Naive thymus-derived CD4-positive, alpha-beta T cell (primary cell): ENCODE measurements at regions of chr5 and their contacts with region 1.

Region 1: DNA sequence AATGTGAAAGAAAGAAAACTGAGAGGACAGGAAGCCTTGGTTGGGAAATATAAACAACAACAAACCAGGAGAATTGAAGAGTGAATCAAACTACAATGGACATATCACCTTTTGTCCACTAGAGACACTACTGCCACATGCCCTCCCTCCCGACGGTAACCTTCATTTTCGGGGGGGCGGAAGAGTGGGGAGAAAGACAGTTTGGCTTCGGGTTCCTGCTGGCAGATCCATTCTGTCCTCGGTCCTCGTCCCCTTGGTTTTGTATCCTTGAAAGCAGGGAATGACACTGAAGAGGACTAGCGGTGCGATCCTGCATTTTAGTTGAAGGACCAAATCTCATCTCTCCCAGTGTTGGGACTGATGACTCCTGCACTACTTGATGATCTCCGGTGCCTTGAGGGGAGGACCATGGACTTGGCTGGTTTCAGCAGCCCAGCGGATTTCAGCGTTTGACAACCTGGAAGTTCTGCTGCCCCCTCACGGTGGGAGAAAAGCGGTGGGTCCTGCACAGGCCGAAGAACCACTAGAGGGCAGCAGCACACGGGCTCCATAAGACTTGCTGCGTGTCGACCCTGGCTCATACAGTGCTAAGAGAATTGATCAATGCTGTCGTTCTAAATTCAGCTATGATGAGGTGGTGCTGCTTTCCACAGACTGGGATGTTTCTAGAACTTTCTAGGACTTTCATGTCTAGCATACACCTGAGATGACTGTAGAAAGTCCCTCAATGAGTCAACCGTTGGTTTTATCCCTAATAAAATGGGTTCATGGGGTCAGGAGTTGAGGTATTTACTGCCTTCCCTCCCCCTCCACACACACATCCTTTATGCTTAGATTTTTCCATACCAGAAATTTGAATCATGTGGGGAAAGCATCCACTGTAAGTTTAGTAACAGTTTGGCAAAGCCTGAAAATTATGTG is 15.1 kb upstream of the ZNF131 start:
- DNase-seq: peak; percentile 75 to 90 (median 85)
- ATAC-seq: peak; percentile 99
- H3K4me3 ChIP-seq: peak overlapping the region; percentile 66
- H3K4me3 Mint-ChIP-seq: peak overlapping the region; percentile 77 to 93 (median 89)
- H3K27ac ChIP-seq: peak overlapping the region; percentile 59
- H3K27ac Mint-ChIP-seq: peak overlapping the region; percentile 43 to 92 (median 88)
- H3K4me1 ChIP-seq: peaks cover 6 to 22% of the 10 kb centered on the region in 2 donors
- H3K4me1 Mint-ChIP-seq: peaks cover 21 to 49% (median 38%) of the 10 kb centered on the region in 7 donors
- H3K27me3 ChIP-seq: no peaks in the 10 kb centered on the region
- H3K27me3 Mint-ChIP-seq: no peaks in the 10 kb centered on the region

Region 2: GRCh38 chr5:43008369-43009153 is 97.1 kb before region 1 on chr5:
- CTCF ChIA-PET with region 1: interaction called, 3 read pairs
- POLR2A ChIA-PET with region 1: interaction called, 12 read pairs
- intact Hi-C with region 1: loop called in 1 of 2 experiments (anchors 1 kb)
- DNase-seq: peak; percentile 79 to 95 (median 90)
- ATAC-seq: peak; percentile 78
- H3K4me3 ChIP-seq: peak overlapping the region; percentile 72
- H3K4me3 Mint-ChIP-seq: peak overlapping the region; percentile 85 to 98 (median 92)
- H3K27ac ChIP-seq: peak overlapping the region; percentile 92
- H3K27ac Mint-ChIP-seq: peak overlapping the region; percentile 96 to 100 (median 98)
- H3K4me1 ChIP-seq: peaks cover 22 to 24% of the 10 kb centered on the region in 2 donors
- H3K4me1 Mint-ChIP-seq: peaks cover 17 to 47% (median 29%) of the 10 kb centered on the region in 7 donors
- H3K27me3 ChIP-seq: no peaks in the 10 kb centered on the region
- H3K27me3 Mint-ChIP-seq: peaks cover 0 to 4% (median 0%) of the 10 kb centered on the region in 5 donors

Region 3: GRCh38 chr5:43073597-43074546 is 31.8 kb before region 1 on chr5:
- CTCF ChIA-PET with region 1: interaction called, 7 read pairs
- POLR2A ChIA-PET with region 1: interaction called, 5 read pairs
- intact Hi-C with region 1: loop called (anchors 1 kb)
- DNase-seq: peak; percentile 7 to 73 (median 65)
- ATAC-seq: peak; percentile 80
- H3K4me3 ChIP-seq: no peak overlapping the region
- H3K4me3 Mint-ChIP-seq: peak overlapping the region in 3 of 10 donors; percentile 12 to 50 (median 18)
- H3K27ac ChIP-seq: no peak overlapping the region
- H3K27ac Mint-ChIP-seq: peak overlapping the region in 7 of 9 donors; percentile 19 to 83 (median 36)
- H3K4me1 ChIP-seq: peaks cover 6 to 22% of the 10 kb centered on the region in 2 donors
- H3K4me1 Mint-ChIP-seq: peaks cover 42 to 77% (median 61%) of the 10 kb centered on the region in 7 donors
- H3K27me3 ChIP-seq: no peaks in the 10 kb centered on the region
- H3K27me3 Mint-ChIP-seq: no peaks in the 10 kb centered on the region

Region 4: DNA sequence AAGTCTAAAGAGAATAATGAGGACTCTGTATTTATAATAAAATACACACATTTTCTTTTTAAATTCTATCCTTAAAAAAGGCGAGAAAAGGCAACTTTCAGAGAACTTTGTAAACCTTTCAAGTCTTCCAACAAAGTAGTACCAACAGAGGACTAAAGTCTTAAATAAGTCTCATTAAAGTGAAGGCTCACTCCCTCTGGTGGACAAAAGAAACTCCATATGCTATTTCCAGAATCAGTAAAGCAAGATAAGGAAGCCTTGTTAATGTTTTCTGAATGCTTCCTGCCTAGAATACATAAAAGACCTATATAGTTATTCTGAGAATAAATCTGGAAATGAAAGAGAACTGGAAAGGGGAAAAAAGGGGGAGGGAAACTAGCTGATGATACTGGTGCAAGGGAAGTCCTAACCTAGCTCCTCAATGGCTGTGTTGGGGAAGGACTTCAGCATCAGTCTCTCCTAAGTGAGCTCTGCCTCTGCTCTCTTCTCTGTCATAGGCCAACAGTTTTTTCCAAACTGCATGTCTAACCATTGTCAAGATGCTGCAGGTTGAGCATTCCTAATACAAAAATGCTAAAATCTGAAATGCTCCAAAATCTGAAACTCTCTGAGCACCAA is 200.4 kb after region 1 on chr5:
- CTCF ChIA-PET with region 1: interaction called, 5 read pairs
- POLR2A ChIA-PET with region 1: no interaction called
- intact Hi-C with region 1: loop called (anchors 1 kb)
- DNase-seq: peak in 7 of 9 donors; percentile 24 to 64 (median 50)
- ATAC-seq: peak; percentile 79
- H3K4me3 ChIP-seq: no peak overlapping the region
- H3K4me3 Mint-ChIP-seq: peak overlapping the region in 1 of 10 donors; percentile 18
- H3K27ac ChIP-seq: no peak overlapping the region
- H3K27ac Mint-ChIP-seq: peak overlapping the region in 6 of 9 donors; percentile 4 to 86 (median 30)
- H3K4me1 ChIP-seq: peaks cover 0 to 10% of the 10 kb centered on the region in 2 donors
- H3K4me1 Mint-ChIP-seq: peaks cover 21 to 82% (median 52%) of the 10 kb centered on the region in 7 donors
- H3K27me3 ChIP-seq: no peaks in the 10 kb centered on the region
- H3K27me3 Mint-ChIP-seq: no peaks in the 10 kb centered on the region

Region 5: GRCh38 chr5:43389679-43390329 is 284.2 kb after region 1 on chr5:
- CTCF ChIA-PET with region 1: interaction called, 5 read pairs
- POLR2A ChIA-PET with region 1: interaction called, 4 read pairs
- intact Hi-C with region 1: loop called (anchors 1 kb)
- DNase-seq: peak in 8 of 9 donors; percentile 28 to 60 (median 50)
- ATAC-seq: peak; percentile 92
- H3K4me3 ChIP-seq: no peak overlapping the region
- H3K4me3 Mint-ChIP-seq: no peak overlapping the region
- H3K27ac ChIP-seq: no peak overlapping the region
- H3K27ac Mint-ChIP-seq: peak overlapping the region in 2 of 9 donors; percentile 62 to 67
- H3K4me1 ChIP-seq: peaks cover 0 to 7% of the 10 kb centered on the region in 2 donors
- H3K4me1 Mint-ChIP-seq: peaks cover 4 to 48% (median 34%) of the 10 kb centered on the region in 7 donors
- H3K27me3 ChIP-seq: no peaks in the 10 kb centered on the region
- H3K27me3 Mint-ChIP-seq: no peaks in the 10 kb centered on the region

Region 6: DNA sequence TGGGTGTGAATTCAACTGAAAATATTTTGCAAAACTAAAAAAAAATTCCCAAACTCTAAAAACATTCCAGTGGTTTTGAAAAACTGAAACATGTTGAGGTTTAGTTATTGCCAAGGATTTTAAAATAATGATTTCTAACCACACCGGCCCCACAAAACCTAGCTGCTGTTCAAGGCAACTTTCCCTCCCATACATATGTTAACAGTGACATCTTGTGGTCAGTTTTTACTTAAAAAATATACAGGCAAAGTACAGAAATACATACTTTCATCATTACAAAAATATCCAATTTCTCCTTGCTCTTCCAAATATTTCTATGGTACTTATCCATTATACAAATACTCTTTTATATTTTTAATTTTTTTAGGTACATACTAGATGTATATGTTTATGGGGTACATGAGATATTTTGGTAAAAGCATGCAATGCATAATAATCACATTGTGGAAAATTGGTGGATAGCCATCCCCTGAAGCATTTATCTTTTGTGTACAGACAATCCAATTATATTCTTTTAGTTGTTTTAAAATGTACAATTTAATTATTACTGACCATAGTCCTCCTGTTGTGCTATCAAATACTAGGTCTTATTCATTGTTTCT is 1668.8 kb after region 1 on chr5:
- CTCF ChIA-PET with region 1: no interaction called
- POLR2A ChIA-PET with region 1: no interaction called
- intact Hi-C with region 1: loop called in 1 of 2 experiments (anchors 5 kb)
- DNase-seq: peak in 5 of 9 donors; percentile 10 to 23 (median 14)
- ATAC-seq: no peak
- H3K4me3 ChIP-seq: no peak overlapping the region
- H3K4me3 Mint-ChIP-seq: no peak overlapping the region
- H3K27ac ChIP-seq: no peak overlapping the region
- H3K27ac Mint-ChIP-seq: no peak overlapping the region
- H3K4me1 ChIP-seq: no peaks in the 10 kb centered on the region
- H3K4me1 Mint-ChIP-seq: no peaks in the 10 kb centered on the region
- H3K27me3 ChIP-seq: no peaks in the 10 kb centered on the region
- H3K27me3 Mint-ChIP-seq: peaks cover 7 to 21% (median 12%) of the 10 kb centered on the region in 5 donors